ENCODE measurements at regions of chr17 and their contacts with region 1.

Region 1: GRCh38 chr17:27601069-27601975 is 29.7 kb upstream of the LGALS9 start:
- DNase-seq: peak; percentile 16
- H3K4me3 ChIP-seq: no peak overlapping the region
- H3K27me3 ChIP-seq: no peaks in the 10 kb centered on the region
- CTCF ChIP-seq: peak; percentile 91

Region 2: GRCh38 chr17:27245230-27245696 is 356.1 kb before region 1 on chr17:
- CTCF ChIA-PET with region 1: interaction called, 35 read pairs
- POLR2A ChIA-PET with region 1: no interaction called
- DNase-seq: no peak
- H3K4me3 ChIP-seq: peak overlapping the region; percentile 5; the same call in 1 of the 2 replicates
- H3K27me3 ChIP-seq: 0 out of 2 replicates have a peak, but pooled peaks cover 1% of the 10 kb centered on the region
- CTCF ChIP-seq: peak; percentile 69

Region 3: DNA sequence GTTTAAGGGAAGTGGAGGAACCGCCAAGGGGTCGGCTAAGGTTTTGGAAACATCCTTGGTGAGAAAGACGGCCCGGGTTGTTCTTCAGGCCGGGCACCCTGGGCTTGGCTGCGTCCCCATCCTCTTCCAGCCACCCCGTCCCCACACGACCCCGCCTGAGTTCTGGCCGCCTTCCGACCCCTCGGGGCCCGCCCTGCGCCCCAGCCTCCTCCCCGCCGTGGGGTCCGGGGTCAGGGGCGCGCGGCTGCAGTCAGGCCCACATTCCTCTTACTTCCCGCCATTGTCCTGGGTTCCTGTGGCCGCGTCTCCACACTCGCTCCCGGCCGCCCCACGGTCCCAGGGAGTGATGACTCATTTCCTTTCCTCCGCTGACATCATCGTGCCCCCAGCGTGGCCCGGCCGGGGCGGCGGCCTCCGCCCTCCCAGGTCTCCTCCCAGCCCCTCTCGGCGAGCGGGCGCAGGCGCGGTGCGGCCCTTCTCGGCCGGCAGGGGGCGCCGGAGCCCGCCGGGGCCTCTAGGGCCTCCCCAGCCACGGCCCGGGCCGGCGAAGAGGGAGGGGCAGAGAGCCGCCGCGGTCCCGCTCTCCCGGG is 247.8 kb before region 1 on chr17:
- CTCF ChIA-PET with region 1: interaction called, 231 read pairs
- POLR2A ChIA-PET with region 1: no interaction called
- DNase-seq: peak; percentile 46
- H3K4me3 ChIP-seq: peak overlapping the region; percentile 77
- H3K27me3 ChIP-seq: no peaks in the 10 kb centered on the region
- CTCF ChIP-seq: peak; percentile 18; the same call in 1 of the 2 replicates

Region 4: GRCh38 chr17:27438348-27438998 is 162.8 kb before region 1 on chr17:
- CTCF ChIA-PET with region 1: interaction called, 36 read pairs
- POLR2A ChIA-PET with region 1: no interaction called
- DNase-seq: no peak
- H3K4me3 ChIP-seq: no peak overlapping the region
- H3K27me3 ChIP-seq: peaks cover 3% of the 10 kb centered on the region
- CTCF ChIP-seq: no peak

Region 5: DNA sequence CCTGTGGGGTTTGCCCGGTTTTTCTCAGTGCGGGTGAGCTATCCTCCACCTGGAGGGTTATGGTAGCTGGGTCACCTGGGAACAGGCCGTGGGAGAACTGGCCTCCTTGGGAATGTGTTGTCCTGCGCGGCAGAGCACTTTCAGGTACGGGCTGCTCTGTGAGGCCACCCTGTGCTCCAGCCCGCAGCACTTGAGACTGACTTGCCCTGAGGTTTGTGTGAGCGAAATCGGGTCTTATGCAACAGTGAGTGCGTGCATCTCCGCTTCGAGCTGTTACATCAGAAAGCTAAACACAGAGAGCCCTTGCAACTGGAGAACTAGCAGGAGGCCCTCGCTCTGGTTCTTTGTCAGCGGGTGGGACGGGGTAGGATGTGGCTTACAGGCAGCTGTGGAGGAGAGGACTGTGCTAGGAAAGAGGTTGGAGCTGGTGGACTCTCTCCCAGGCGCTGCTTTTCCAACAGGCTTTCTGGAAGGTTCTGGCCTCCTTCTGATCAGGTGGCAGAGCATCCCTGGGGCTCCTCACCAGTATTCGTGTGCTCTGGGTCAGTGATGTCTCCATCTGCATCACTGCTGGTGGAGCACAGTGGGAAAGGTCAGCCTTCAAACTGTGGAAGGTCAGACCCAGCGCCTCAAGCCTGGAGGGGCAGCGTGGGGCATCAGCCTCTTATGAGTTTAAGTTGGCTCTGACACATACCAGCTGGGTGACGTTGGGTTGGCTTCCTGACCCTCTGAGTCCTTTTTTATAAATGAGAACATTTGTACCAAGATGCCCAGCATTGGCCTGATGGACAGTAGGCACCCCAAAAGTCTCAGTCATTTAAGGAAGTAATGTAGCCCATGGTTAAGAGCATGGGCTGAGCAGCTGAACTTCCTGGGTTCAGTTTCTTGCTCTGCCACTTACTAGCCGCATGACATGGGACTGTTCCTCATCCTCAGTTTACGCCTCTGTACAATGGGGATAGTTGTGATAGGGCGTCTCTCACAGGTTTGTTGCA is 68.8 kb before region 1 on chr17:
- CTCF ChIA-PET with region 1: interaction called, 13 read pairs
- POLR2A ChIA-PET with region 1: no interaction called
- DNase-seq: no peak
- H3K4me3 ChIP-seq: no peak overlapping the region
- H3K27me3 ChIP-seq: no peaks in the 10 kb centered on the region
- CTCF ChIP-seq: no peak

Region 6: DNA sequence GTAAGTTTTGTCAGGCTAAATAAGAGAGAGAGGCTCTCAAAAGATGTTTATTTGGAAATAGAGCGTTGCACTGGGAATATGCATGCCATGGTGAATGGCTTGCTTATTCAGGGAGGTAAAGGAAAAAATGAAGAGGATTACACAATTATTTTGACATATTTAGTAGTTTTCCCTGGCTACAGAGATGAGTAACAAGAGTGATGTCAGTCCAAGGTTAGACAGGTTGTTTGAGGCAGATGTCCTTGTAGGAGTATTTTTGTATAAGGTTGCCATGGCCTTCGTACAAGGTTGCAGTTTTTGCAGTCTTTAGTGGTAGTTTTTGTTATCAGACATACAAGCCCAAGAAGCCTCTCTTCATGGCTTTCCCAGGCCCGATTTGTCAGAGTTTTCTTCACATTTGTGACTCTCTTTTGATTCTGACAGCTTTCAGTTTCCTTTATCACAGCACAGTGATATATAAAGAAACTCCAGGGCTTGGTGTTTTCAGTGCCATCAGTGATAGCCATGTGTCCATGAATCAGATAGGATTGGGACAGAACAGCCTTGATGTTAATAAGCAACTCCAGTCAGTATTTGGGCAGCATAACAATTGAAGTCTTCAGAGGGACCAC is 10.9 kb after region 1 on chr17:
- CTCF ChIA-PET with region 1: interaction called, 34 read pairs
- POLR2A ChIA-PET with region 1: no interaction called
- DNase-seq: no peak
- H3K4me3 ChIP-seq: no peak overlapping the region
- H3K27me3 ChIP-seq: no peaks in the 10 kb centered on the region
- CTCF ChIP-seq: no peak

Region 7: GRCh38 chr17:27760069-27760885 is 159.0 kb after region 1 on chr17:
- CTCF ChIA-PET with region 1: interaction called, 13 read pairs
- POLR2A ChIA-PET with region 1: no interaction called
- DNase-seq: no peak
- H3K4me3 ChIP-seq: no peak overlapping the region
- H3K27me3 ChIP-seq: no peaks in the 10 kb centered on the region; the same call in 1 of the 2 replicates
- CTCF ChIP-seq: peak; percentile 82